Left colon (tissue), 2 donors: ENCODE measurements at regions of chr18 and their contacts with region 1.

Region 1: DNA sequence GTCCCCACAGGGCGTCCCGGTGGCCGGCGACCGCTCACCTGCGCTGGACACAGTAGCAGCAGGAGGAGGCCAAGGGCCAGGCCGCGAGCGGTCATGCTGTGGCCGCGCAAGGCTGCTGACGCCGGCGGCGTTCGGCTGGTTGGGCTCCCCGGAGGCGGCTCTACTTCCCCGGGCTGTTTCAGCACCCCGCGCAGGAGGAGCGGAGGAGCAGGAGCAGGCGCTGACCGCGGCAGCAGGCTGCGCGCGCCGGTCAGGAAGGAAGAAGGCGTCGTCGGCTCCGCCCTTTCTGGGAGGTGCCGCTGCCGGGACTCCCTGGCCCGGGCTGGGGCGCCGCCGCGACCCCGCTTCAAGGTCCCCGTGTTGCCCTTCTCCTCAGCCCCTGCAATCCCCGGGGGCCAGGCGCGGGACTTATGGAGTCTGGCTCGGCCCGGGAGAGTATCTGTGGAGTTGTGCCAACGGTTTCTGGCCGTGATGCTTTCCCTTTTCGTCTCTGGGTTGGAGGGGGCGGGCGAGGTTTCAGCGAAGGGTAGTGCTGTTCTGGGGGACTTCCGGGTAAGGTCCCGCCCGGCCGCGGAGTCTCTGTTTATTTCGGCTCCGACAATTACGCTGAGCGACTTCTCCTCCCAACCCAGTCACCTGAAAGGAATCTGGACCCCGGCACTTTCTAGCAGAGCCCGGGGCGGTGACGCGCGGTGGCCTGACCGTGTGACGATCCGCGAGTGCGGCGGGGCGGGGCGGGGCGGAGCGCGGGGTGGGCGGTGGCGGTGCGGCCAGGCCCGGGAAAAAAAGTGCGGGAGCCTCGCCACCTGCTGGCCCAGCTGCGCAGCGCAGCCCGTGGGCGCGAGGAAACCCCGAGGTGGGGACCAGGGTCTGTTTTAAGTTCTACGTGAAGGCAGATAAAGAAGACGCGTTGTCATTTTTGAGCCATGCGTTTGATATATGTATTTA is at the start of gene NPC1:
- DNase-seq: peak; percentile 92 to 95
- ATAC-seq: peak; percentile 91
- total RNA-seq, gene NPC1: 36.5 to 43.2 TPM

Region 2: GRCh38 chr18:23512641-23513040 is 73.9 kb before region 1 on chr18:
- intact Hi-C with region 1: loop called in 1 of 2 experiments (anchors 5 kb)
- DNase-seq: no peak
- ATAC-seq: no peak